ENCODE measurements at regions of chr11 and their contacts with region 1.

Region 1: GRCh38 chr11:2151500-2152257 is 9.3 kb downstream of the INS start:
- DNase-seq: peak; percentile 90
- H3K4me3 ChIP-seq: peak overlapping the region in 1 of 2 experiments; percentile 5; a peak in 1 of 4 replicates
- H3K27ac ChIP-seq: peak overlapping the region in 1 of 2 experiments; percentile 4; a peak in 1 of 4 replicates
- H3K4me1 ChIP-seq: peaks cover 0 to 21% of the 10 kb centered on the region in 2 experiments; a peak in 1 of 4 replicates
- H3K27me3 ChIP-seq: peaks cover 28% of the 10 kb centered on the region
- CTCF ChIP-seq: peak; percentile 70
- EP300 ChIP-seq: no peak
- RAD21 ChIP-seq: peak; percentile 85

Region 2: DNA sequence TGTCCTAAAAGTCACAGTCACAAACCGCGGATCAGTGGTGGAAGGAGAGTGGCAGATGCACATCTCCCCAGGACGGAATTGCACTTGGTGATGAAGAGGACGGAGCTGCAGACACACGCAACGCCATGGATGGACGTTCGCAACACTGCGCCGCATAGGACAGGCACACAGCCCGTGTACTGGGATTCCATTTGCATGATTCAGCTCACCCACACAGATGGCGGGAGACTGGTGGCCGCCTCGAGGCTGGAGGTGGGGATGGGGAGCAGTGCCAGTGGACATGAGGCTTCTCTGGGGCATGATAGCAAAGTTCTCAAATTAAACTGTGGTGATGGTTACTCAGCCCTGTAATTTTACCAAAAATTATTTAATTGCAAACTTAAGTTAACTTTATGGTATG is 617.0 kb before region 1 on chr11:
- CTCF ChIA-PET with region 1: no interaction called
- POLR2A ChIA-PET with region 1: no interaction called
- DNase-seq: no peak
- H3K4me3 ChIP-seq: no peak overlapping the region
- H3K27ac ChIP-seq: no peak overlapping the region
- H3K4me1 ChIP-seq: peaks cover 0 to 17% of the 10 kb centered on the region in 2 experiments; a peak in 1 of 4 replicates
- H3K27me3 ChIP-seq: peaks cover 7% of the 10 kb centered on the region; the same call in 1 of the 2 replicates
- CTCF ChIP-seq: no peak
- EP300 ChIP-seq: no peak
- RAD21 ChIP-seq: no peak

Region 3: DNA sequence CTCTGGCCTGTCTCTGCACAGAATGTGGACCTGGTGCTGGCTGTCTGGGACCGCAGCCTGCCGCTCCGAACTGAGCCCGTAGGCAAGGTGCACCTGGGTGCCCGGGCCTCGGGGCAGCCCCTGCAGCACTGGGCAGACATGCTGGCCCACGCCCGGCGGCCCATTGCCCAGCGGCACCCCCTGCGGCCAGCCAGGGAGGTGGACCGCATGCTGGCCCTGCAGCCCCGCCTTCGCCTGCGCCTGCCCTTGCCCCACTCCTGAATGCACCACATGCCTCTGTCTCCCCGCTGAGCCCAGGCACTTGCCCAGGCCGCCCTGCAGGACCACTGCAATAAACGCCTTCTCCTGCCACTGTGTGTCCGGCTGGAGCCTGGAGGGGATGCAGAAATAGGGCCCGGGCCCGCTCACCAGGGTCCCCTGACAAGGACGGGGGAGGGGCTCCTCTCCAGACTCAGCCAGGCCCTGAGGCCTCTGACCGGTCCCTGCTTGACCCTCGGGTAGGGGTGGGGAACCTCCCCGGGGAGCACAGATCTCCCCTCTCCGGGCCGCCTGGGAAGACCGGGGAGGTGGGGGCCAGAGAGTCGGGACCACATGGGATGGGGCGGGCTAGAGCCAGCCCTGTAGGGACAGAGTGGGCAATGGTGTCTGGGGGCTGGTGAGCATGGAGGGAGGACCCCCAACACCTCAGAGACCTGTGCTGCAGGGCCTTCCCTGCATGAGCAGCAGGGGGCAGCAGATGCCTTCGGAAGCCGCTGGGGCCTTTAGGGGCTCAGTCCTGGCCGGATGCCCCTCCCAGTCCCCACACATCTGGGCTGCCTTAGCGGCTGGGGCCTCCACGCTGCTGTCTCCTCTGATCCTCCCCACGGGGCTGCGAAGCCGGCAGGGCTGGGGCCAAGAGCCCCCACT is 314.3 kb before region 1 on chr11:
- CTCF ChIA-PET with region 1: interaction called, 478 read pairs
- POLR2A ChIA-PET with region 1: interaction called, 4 read pairs
- DNase-seq: peak; percentile 97
- H3K4me3 ChIP-seq: no peak overlapping the region
- H3K27ac ChIP-seq: peak overlapping the region in 1 of 2 experiments; percentile 60; a peak in 1 of 4 replicates
- H3K4me1 ChIP-seq: peaks cover 0 to 39% of the 10 kb centered on the region in 2 experiments; a peak in 1 of 4 replicates
- H3K27me3 ChIP-seq: no peaks in the 10 kb centered on the region
- CTCF ChIP-seq: peak; percentile 80
- EP300 ChIP-seq: no peak
- RAD21 ChIP-seq: peak; percentile 93

Region 4: DNA sequence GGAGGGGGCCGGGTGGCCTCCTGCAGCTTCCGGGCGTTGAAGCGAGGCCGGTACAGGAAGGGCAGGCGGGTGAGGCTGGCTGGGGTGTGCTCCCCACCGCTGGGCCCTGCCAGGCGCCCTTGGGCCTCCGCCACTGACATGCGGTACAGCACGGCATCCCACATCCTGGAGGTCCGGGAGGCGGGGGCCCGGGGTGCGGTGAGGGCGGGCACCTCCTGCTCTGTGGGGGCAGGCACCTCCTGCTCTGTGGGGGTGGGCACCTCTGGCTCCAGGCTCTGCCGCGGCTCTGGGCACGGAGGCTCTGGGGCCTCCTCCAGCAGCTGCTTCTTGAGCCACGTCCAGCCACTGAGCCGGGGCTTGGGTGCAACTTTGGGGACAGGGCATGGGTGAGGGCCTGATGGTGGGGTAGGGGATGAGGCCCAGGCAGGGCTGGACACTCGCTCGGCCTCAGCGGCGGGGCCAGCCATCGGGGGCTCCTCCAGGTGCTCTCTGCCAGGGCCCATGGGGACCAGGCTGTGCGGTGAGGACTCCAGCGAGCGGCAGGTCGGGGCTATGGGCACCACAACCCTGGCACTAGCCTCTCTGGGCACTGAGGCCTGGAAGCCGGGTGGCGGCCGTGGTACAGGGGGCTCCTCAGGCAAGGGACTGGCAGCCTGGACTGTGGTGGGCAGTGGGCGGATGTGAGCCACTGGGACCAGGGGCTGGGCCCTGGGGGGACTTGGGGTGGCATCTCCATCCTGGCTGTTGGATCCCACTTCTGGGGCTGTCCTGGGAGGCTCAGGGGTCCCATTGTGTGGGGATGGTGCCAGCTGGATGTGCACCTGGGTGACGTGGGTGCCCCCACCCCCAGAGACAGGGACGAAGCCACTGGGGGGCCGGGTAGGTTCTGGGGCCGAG is 262.2 kb before region 1 on chr11:
- CTCF ChIA-PET with region 1: interaction called, 179 read pairs
- POLR2A ChIA-PET with region 1: no interaction called
- DNase-seq: peak; percentile 29
- H3K4me3 ChIP-seq: no peak overlapping the region
- H3K27ac ChIP-seq: no peak overlapping the region
- H3K4me1 ChIP-seq: peaks cover 0 to 6% of the 10 kb centered on the region in 2 experiments; a peak in 1 of 4 replicates
- H3K27me3 ChIP-seq: no peaks in the 10 kb centered on the region
- CTCF ChIP-seq: no peak
- EP300 ChIP-seq: no peak
- RAD21 ChIP-seq: no peak

Region 5: DNA sequence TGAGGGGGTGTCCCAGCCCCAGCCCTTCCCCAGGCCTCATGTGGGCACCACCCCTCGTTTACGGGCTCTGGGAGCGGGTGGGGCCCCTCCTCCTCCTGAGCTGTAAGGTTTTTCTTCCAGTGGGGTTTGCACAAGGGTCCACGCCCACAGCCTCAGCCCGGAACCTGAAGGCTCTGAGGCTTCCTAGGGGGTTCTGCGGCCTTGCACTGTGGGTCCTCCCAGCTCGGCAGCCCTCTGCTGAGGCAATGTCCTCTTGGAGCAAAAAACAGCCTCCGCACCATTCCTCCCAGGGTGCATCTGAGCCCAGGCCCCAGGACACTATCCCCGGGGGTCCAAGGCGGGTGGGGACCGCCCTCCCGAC is 168.1 kb before region 1 on chr11:
- CTCF ChIA-PET with region 1: interaction called, 30 read pairs
- POLR2A ChIA-PET with region 1: interaction called, 3 read pairs
- DNase-seq: no peak
- H3K4me3 ChIP-seq: no peak overlapping the region
- H3K27ac ChIP-seq: no peak overlapping the region; a peak in 1 of 4 replicates
- H3K4me1 ChIP-seq: no peaks in the 10 kb centered on the region
- H3K27me3 ChIP-seq: no peaks in the 10 kb centered on the region
- CTCF ChIP-seq: no peak
- EP300 ChIP-seq: no peak
- RAD21 ChIP-seq: no peak

Region 6: GRCh38 chr11:2120359-2121100 is 31.1 kb before region 1 on chr11:
- CTCF ChIA-PET with region 1: interaction called, 33 read pairs
- POLR2A ChIA-PET with region 1: no interaction called
- DNase-seq: peak; percentile 92
- H3K4me3 ChIP-seq: no peak overlapping the region
- H3K27ac ChIP-seq: peak overlapping the region in 1 of 2 experiments; percentile 43; a peak in 1 of 4 replicates
- H3K4me1 ChIP-seq: peaks cover 0 to 11% of the 10 kb centered on the region in 2 experiments; a peak in 1 of 4 replicates
- H3K27me3 ChIP-seq: no peaks in the 10 kb centered on the region
- CTCF ChIP-seq: no peak
- EP300 ChIP-seq: no peak
- RAD21 ChIP-seq: peak; percentile 10; the same call in 1 of the 2 replicates

Region 7: GRCh38 chr11:2196970-2197770 is 45.5 kb after region 1 on chr11:
- CTCF ChIA-PET with region 1: interaction called, 32 read pairs
- POLR2A ChIA-PET with region 1: interaction called, 10 read pairs
- DNase-seq: peak; percentile 91
- H3K4me3 ChIP-seq: no peak overlapping the region
- H3K27ac ChIP-seq: no peak overlapping the region
- H3K4me1 ChIP-seq: peaks cover 0 to 28% of the 10 kb centered on the region in 2 experiments; a peak in 1 of 4 replicates
- H3K27me3 ChIP-seq: no peaks in the 10 kb centered on the region
- CTCF ChIP-seq: peak; percentile 60
- EP300 ChIP-seq: no peak
- RAD21 ChIP-seq: peak; percentile 91

Region 8: DNA sequence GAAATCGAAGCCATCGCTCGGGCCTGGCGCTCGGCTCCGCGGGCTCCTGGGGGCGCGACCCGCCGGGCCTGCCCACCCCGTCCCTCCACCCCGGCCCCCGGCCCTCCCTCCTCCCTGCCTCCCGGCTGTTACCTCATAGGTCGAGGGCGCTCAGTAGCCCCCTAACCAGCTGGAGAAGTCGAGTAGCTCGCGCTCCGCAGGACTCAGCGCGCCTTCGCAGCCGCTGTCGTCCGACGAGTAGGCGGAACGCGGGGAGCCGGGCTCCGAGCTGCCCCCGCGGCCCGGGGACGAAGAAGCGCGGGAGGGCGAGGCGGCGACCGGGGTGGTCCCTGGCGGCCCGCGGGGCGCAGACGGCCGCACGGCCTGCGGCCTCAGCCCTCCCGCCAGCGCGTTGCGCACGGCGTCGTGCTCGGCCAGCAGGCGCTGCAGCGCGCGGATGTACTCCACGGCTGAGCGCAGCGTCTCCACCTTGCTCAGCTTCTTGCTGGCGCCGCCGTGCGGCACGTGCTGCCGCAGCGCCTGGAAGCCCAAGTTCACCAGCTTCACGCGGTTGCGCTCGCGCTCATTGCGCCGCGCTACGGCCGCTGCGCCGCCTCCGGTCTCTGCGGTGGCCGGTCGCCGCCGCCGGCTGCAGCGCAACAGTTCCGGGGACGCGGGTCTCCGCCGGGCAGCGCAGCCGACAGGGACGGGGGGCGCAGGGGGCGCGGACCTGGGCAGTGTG is 118.1 kb after region 1 on chr11:
- CTCF ChIA-PET with region 1: no interaction called
- POLR2A ChIA-PET with region 1: no interaction called
- DNase-seq: peak; percentile 82
- H3K4me3 ChIP-seq: no peak overlapping the region
- H3K27ac ChIP-seq: no peak overlapping the region
- H3K4me1 ChIP-seq: no peaks in the 10 kb centered on the region
- H3K27me3 ChIP-seq: peaks cover 29% of the 10 kb centered on the region
- CTCF ChIP-seq: no peak
- EP300 ChIP-seq: no peak
- RAD21 ChIP-seq: peak; percentile 13; the same call in 1 of the 2 replicates

Region 9: DNA sequence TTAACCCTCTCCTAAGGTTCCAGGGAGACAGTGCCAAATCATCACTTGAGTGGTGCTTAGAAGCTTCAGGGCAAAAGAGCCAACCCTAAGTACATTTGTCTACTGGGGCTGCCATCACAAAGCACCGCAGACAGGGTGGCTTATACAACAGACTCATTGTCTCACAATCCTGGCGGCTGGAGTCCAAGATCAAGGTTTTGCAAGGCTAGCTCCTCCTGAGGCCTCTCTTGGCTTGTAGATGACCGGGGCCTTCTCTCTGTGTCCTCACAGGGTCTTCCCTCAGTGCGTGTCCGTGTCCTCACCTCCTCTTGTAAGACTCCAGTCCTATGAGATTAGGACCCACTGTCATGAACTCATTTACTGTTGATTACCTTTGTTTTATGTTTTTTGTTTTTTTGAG is 191.3 kb after region 1 on chr11:
- CTCF ChIA-PET with region 1: no interaction called
- POLR2A ChIA-PET with region 1: no interaction called
- DNase-seq: no peak
- H3K4me3 ChIP-seq: no peak overlapping the region
- H3K27ac ChIP-seq: no peak overlapping the region
- H3K4me1 ChIP-seq: no peaks in the 10 kb centered on the region
- H3K27me3 ChIP-seq: no peaks in the 10 kb centered on the region
- CTCF ChIP-seq: no peak
- EP300 ChIP-seq: no peak
- RAD21 ChIP-seq: no peak